Colonic mucosa (tissue), 4 donors: ENCODE measurements at regions of chr12 and their contacts with region 1.

Region 1: DNA sequence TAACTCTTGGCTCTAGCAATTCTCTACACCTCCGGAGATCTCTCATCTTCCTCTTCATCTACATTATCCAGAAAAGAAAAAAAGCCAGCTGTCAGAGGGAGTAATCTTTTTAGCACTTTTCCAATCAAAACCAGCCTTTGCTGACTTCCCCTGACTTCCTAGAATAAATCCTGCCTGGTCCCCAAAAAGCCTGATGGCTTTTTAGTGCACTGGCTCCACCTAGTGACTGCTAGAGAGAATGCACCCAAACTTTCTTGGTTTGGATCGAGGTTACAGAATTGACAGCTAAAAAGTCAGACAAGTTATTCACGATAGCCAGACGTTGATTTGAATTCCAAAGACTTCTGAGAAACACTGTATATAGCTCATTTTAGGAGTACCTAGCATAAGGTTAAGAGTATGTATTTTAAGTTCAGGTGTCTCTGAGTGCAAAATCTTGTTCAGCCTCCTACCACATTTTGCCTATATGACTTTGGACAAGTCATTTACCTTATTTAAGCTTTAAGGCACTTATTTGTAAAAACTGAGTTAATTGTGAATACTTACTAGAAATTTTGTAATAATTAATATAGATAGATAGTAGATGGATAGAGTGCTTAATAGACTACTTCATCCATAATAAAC is 185.7 kb upstream of the GRIN2B start:
- DNase-seq: peak; percentile 62
- H3K4me3 ChIP-seq: no peak overlapping the region
- H3K27ac ChIP-seq: no peak overlapping the region
- H3K4me1 ChIP-seq: no peaks in the 10 kb centered on the region
- H3K27me3 ChIP-seq: no peaks in the 10 kb centered on the region
- CTCF ChIP-seq: peak; percentile 93

Region 2: GRCh38 chr12:13255792-13256691 is 911.1 kb before region 1 on chr12:
- intact Hi-C with region 1: loop called (anchors 5 kb)
- DNase-seq: peak; percentile 96
- H3K4me3 ChIP-seq: no peak overlapping the region
- H3K27ac ChIP-seq: no peak overlapping the region
- H3K4me1 ChIP-seq: no peaks in the 10 kb centered on the region
- H3K27me3 ChIP-seq: no peaks in the 10 kb centered on the region
- CTCF ChIP-seq: peak; percentile 96

Region 3: DNA sequence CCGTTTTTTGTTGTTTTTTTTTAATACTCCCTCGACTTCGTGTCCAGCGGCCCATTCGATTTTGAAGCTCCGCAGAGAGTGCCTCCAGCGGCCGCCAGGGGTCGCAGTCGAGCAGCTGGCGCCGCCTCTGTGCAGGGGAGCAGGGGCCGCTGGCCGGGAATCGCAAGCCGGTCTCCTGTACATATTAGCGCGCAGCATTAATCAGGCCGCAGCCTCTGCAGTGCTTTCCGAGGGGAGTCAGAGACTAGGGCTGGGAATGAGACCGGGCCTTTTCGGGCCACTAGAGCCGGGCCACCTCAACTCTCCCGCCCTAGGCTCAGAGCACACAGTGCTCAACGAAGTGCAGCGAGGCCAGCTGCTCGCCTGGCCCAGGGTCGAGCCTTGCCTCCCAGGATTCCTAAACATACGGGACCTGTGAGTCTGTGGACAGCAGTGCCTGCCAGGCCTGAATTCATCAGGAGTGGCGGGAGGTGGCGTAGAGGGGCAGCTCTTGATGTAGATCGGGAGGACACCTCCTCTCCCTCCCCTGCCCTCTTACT is 888.8 kb before region 1 on chr12:
- intact Hi-C with region 1: loop called (anchors 5 kb)
- DNase-seq: peak; percentile 59
- H3K4me3 ChIP-seq: no peak overlapping the region
- H3K27ac ChIP-seq: no peak overlapping the region
- H3K4me1 ChIP-seq: no peaks in the 10 kb centered on the region
- H3K27me3 ChIP-seq: no peaks in the 10 kb centered on the region
- CTCF ChIP-seq: peak; percentile 99

Region 4: DNA sequence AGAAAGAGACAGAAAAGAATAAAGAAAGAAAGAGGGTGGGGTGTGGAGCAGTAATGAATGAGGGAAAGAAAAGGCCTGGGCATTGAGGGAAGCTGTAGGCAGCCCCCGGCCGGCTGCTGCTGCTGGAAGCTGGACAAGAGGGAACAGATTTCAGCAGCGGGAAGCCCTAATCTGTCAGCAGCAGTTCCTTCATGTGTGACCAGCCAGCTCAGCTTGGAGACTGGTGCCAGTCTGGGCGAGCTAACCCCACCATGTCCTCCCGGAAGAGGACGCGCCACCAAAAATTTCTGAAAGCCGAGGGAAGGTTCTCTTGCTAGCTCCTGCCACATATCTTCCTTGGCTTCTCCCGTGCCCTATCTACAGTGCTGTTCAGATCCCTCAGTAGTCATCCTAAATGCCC is 422.6 kb before region 1 on chr12:
- intact Hi-C with region 1: loop called (anchors 5 kb)
- DNase-seq: no peak
- H3K4me3 ChIP-seq: no peak overlapping the region
- H3K27ac ChIP-seq: no peak overlapping the region
- H3K4me1 ChIP-seq: no peaks in the 10 kb centered on the region
- H3K27me3 ChIP-seq: no peaks in the 10 kb centered on the region
- CTCF ChIP-seq: no peak

Region 5: GRCh38 chr12:13864081-13864673 is 302.9 kb before region 1 on chr12:
- intact Hi-C with region 1: loop called (anchors 2 kb)
- DNase-seq: peak; percentile 78
- H3K4me3 ChIP-seq: no peak overlapping the region
- H3K27ac ChIP-seq: no peak overlapping the region
- H3K4me1 ChIP-seq: no peaks in the 10 kb centered on the region
- H3K27me3 ChIP-seq: no peaks in the 10 kb centered on the region
- CTCF ChIP-seq: peak; percentile 84

Region 6: DNA sequence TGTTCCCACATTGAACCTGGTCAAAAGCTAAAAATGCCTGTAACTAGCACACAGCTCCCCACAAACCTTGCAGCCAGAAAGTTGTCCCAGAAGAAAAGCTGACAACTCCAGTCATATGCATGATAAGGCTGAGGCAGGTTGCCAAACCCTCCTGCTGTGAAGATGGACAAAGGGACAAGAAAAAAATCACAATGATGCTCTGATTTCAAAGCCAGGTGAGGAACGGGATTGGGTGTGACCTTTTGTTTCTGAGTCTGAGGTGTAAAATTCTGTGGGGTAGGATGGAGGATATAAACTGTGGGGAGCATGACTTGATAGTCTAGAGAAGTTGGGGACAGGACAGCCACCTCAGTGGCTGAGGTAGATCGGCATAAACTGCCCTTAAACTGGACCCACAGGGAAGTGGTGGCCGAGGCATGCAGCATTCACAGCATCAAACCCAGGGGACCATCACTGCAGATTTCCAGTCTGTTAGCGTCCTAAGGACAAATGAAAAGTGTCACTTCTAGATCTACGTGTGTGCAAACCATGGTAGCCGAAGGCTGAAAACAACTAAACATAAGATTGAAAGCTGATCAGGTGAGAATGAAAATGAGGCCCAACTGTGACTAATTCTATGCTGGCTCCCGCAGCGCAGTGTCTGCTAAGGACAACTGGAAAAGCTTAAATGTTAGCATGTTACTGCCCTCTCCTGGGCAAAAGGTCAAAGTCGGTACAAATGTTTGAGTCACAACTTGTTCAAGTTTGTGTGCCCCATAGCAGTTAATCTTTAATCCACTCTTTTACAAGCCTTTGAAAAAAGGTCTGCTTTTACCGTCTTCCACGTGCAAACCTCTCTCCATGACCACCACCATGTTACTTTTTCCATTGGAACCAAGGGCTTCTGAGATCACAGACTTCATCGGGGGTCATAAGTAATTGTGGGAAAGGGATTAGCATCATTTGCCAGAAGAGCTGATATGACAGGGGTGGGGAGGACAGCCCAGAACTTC is 225.6 kb before region 1 on chr12:
- intact Hi-C with region 1: loop called (anchors 10 kb)
- DNase-seq: peak; percentile 84
- H3K4me3 ChIP-seq: no peak overlapping the region
- H3K27ac ChIP-seq: no peak overlapping the region
- H3K4me1 ChIP-seq: no peaks in the 10 kb centered on the region
- H3K27me3 ChIP-seq: no peaks in the 10 kb centered on the region
- CTCF ChIP-seq: peak; percentile 20

Region 7: GRCh38 chr12:14207905-14208551 is 40.9 kb after region 1 on chr12:
- intact Hi-C with region 1: no loop called
- DNase-seq: peak; percentile 81
- H3K4me3 ChIP-seq: no peak overlapping the region
- H3K27ac ChIP-seq: peak overlapping the region; percentile 75
- H3K4me1 ChIP-seq: peaks cover 3% of the 10 kb centered on the region
- H3K27me3 ChIP-seq: no peaks in the 10 kb centered on the region
- CTCF ChIP-seq: no peak

Region 8: GRCh38 chr12:14219156-14219555 is 52.0 kb after region 1 on chr12:
- intact Hi-C with region 1: no loop called
- DNase-seq: peak; percentile 50
- H3K4me3 ChIP-seq: no peak overlapping the region
- H3K27ac ChIP-seq: peak overlapping the region; percentile 40
- H3K4me1 ChIP-seq: no peaks in the 10 kb centered on the region
- H3K27me3 ChIP-seq: no peaks in the 10 kb centered on the region
- CTCF ChIP-seq: no peak